CD4-positive, alpha-beta T cell (primary cell): ENCODE measurements at regions of chr20 and their contacts with region 1.

Region 1: GRCh38 chr20:3173610-3174441 is 477 bp upstream of the LZTS3 start:
- DNase-seq: peak; percentile 83 to 95 (median 92)
- ATAC-seq: peak; percentile 11
- H3K4me3 ChIP-seq: peak overlapping the region; percentile 87
- H3K4me3 Mint-ChIP-seq: peak overlapping the region; percentile 87
- H3K27ac ChIP-seq: no peak overlapping the region
- H3K27ac Mint-ChIP-seq: peak overlapping the region; percentile 85
- H3K4me1 ChIP-seq: peaks cover 22% of the 10 kb centered on the region
- H3K4me1 Mint-ChIP-seq: peaks cover 20% of the 10 kb centered on the region
- H3K27me3 ChIP-seq: peaks cover 9 to 11% of the 10 kb centered on the region in 2 experiments
- H3K27me3 Mint-ChIP-seq: peaks cover 31% of the 10 kb centered on the region
- CTCF ChIP-seq: no peak

Region 2: GRCh38 chr20:3051385-3052019 is 122.3 kb before region 1 on chr20:
- CTCF ChIA-PET with region 1: no interaction called
- POLR2A ChIA-PET with region 1: no interaction called
- intact Hi-C with region 1: loop called in 1 of 2 experiments (anchors 2 kb)
- DNase-seq: no peak
- ATAC-seq: peak; percentile 47
- H3K4me3 ChIP-seq: no peak overlapping the region
- H3K4me3 Mint-ChIP-seq: no peak overlapping the region
- H3K27ac ChIP-seq: no peak overlapping the region
- H3K27ac Mint-ChIP-seq: no peak overlapping the region
- H3K4me1 ChIP-seq: peaks cover 18% of the 10 kb centered on the region
- H3K4me1 Mint-ChIP-seq: peaks cover 18% of the 10 kb centered on the region
- H3K27me3 ChIP-seq: no peaks in the 10 kb centered on the region
- H3K27me3 Mint-ChIP-seq: no peaks in the 10 kb centered on the region
- CTCF ChIP-seq: no peak

Region 3: DNA sequence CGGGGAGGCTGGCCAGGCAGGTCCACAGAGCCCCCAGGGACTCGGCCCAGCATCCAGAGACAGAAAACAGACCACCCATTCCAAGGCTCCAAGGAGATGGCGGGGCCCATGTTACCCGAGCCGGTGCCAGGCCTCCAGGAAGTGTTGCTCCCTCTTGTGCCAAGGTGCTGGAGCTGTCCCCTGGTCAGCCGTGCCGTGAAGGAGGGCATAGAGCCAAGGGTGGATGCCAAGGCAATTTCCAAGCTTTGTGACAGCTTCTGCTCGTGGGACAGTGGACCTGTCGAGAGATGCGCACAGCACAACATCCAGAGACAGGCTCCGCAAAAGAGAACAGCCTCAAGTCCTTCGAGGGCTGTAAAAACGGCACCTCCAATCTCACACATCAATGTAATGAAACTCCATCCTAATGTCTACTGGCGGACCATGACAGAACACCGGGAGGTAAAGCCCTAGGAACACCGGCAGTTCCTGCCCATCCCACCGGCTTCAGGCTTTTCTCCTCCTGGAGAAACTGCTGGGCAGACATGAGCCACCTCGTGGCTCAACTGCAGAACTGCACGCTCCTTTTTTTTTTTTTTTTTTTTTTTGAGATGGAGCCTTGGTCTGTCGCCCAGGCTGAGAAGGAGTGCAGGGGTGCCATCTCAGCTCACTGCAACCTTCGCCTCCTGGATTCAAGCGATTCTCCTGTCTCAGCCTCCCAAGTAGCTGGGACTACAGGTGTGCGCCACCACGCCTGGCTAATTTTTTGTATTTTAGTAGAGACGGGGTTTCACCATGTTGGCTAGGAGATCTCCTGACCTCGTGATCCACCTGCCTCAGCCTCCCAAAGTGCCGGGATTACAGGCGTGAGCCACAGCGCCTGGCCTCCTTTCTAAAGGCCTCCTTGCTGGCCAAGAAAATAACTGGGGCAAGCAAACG is 58.4 kb before region 1 on chr20:
- CTCF ChIA-PET with region 1: no interaction called
- POLR2A ChIA-PET with region 1: no interaction called
- intact Hi-C with region 1: loop called (anchors 2 to 5 kb)
- DNase-seq: peak in 6 of 14 experiments; percentile 18 to 74 (median 36)
- ATAC-seq: peak; percentile 58
- H3K4me3 ChIP-seq: no peak overlapping the region
- H3K4me3 Mint-ChIP-seq: no peak overlapping the region
- H3K27ac ChIP-seq: no peak overlapping the region
- H3K27ac Mint-ChIP-seq: peak overlapping the region; percentile 22
- H3K4me1 ChIP-seq: peaks cover 23% of the 10 kb centered on the region
- H3K4me1 Mint-ChIP-seq: peaks cover 21% of the 10 kb centered on the region
- H3K27me3 ChIP-seq: no peaks in the 10 kb centered on the region
- H3K27me3 Mint-ChIP-seq: no peaks in the 10 kb centered on the region
- CTCF ChIP-seq: peak; percentile 87

Region 4: DNA sequence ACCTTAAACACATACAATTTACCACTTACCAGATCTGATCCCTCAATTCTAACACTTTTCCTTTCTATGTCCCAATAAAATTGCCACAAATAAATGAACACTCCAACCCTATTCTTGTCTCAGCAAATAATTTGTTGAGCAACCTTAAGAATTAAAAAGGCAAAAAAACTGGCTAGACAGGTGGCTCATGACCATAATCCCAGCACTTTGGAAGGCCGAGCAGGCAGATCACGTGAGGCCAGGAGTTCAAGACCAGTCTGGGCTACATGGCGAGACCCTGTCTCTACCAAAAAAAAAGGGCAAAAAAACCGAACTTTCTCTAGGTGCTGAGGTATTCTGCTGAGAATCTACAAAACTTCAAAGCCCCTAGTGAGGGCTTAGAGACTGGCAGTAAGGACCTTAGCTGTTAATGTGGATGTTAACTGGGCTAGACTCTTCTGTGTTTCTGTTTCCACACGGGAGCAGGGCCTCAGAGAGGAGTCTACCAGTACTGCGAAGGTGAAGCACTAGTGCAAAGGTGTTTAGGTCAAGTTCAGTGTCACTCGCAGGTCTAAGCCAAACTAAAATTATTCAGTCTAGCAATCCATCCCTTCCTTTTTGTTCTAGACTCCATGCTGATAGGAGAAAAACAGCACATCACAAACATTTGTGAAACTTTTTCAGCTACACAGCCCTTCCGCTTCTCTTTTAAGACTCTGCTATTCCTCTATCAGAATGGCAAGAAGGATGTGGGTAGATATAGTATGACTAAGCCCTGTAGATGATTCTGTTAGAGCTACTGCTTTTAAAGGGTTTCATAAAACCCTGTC is 16.8 kb before region 1 on chr20:
- CTCF ChIA-PET with region 1: interaction called, 10 read pairs
- POLR2A ChIA-PET with region 1: interaction called, 16 read pairs
- intact Hi-C with region 1: loop called (anchors 1 to 2 kb)
- DNase-seq: peak in 4 of 14 experiments; percentile 30 to 71 (median 61)
- ATAC-seq: peak; percentile 85
- H3K4me3 ChIP-seq: peak overlapping the region; percentile 97
- H3K4me3 Mint-ChIP-seq: peak overlapping the region; percentile 87
- H3K27ac ChIP-seq: peak overlapping the region; percentile 47 to 48
- H3K27ac Mint-ChIP-seq: peak overlapping the region; percentile 94
- H3K4me1 ChIP-seq: peaks cover 46% of the 10 kb centered on the region
- H3K4me1 Mint-ChIP-seq: peaks cover 75% of the 10 kb centered on the region
- H3K27me3 ChIP-seq: no peaks in the 10 kb centered on the region
- H3K27me3 Mint-ChIP-seq: no peaks in the 10 kb centered on the region
- CTCF ChIP-seq: no peak

Region 5: DNA sequence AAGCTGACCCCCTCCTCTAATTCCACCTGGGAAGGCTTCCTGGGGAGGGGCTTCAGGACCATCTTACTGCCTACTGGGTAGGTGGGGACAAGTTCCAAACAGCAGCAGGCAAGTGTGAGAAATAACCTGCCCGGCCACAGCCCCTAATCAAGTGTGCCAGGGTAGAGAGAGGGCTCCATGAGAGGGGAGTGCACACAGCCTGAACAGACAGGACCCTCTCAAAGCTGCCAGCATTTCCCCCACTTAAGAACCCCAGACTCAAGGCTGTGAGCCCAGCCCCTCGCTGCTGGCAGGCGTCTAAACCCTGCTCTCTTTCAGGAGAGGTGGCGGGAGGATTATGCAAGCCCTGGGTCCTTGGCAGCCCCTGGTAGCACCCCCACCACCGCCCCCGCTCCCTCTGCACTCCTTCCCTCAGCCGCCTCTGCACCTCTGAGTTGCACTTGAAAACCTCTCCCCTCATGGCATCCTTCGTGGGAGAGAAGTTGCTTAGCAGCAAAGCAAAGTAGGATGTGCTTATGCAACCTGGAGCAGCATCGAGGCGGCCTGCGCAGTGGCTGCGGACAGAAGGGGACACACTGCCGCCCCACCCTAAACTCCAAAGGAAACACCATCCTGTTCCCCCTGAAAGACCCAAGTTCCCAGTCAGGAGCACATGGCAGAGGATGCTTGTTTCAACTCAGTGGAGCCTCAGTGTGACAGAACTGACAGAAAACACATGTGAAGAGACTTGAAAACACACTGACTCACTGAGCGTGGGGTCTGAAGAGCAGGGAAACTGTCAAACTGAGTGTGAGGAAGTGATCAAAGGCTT is 20.2 kb after region 1 on chr20:
- CTCF ChIA-PET with region 1: no interaction called
- POLR2A ChIA-PET with region 1: no interaction called
- intact Hi-C with region 1: no loop called
- DNase-seq: no peak
- ATAC-seq: no peak
- H3K4me3 ChIP-seq: no peak overlapping the region
- H3K4me3 Mint-ChIP-seq: no peak overlapping the region
- H3K27ac ChIP-seq: no peak overlapping the region
- H3K27ac Mint-ChIP-seq: no peak overlapping the region
- H3K4me1 ChIP-seq: no peaks in the 10 kb centered on the region
- H3K4me1 Mint-ChIP-seq: peaks cover 9% of the 10 kb centered on the region
- H3K27me3 ChIP-seq: no peaks in the 10 kb centered on the region
- H3K27me3 Mint-ChIP-seq: no peaks in the 10 kb centered on the region
- CTCF ChIP-seq: no peak

Region 6: DNA sequence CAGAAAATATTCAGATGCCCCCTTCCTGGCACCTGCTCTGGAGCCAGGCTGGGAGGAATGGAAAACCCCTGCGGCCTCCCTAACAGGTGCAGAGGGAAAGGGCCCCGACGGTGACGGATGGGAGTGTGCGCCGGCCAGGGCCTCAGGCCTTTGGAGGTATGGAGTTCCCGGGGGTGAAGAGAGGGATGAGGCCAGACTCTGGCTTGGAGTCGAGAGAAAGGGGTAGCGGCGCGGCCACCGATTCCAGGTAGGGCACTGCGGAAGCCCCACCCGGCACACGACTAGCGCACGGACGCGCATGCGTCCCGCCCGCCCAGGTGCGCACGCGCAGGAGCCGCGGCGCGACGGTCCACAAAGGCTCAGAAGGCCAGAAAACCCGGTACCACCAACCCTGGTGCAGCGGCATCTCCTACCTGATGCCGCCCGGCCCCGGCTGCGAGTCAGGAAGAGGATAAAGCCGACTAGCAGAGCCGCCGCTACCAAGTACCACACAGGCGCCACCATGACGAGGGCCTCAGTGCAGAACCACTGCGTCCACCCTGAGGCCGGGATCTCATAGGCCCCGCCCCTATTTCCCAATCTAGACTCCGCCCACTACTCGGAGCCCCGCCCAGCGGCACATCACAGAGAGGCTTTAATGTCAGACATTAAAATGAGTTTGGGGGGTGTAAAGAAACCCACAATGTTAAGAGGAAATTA is 30.4 kb after region 1 on chr20 and contains the start of gene DDRGK1:
- CTCF ChIA-PET with region 1: no interaction called
- POLR2A ChIA-PET with region 1: no interaction called
- intact Hi-C with region 1: loop called in 1 of 2 experiments (anchors 1 kb)
- DNase-seq: peak; percentile 80 to 94 (median 88)
- ATAC-seq: peak; percentile 86
- H3K4me3 ChIP-seq: peak within 1 kb of the TSS; percentile 99
- H3K4me3 Mint-ChIP-seq: peak within 1 kb of the TSS; percentile 96
- H3K27ac ChIP-seq: peak within 1 kb of the TSS; percentile 78 to 83
- H3K27ac Mint-ChIP-seq: peak within 1 kb of the TSS; percentile 92
- H3K4me1 ChIP-seq: peaks cover 34% of the 10 kb centered on the region
- H3K4me1 Mint-ChIP-seq: peaks cover 29% of the 10 kb centered on the region
- H3K27me3 ChIP-seq: no peaks in the 10 kb centered on the region
- H3K27me3 Mint-ChIP-seq: no peaks in the 10 kb centered on the region
- CTCF ChIP-seq: no peak
- total RNA-seq, gene DDRGK1: 40.7 to 43.4 TPM

Region 7: DNA sequence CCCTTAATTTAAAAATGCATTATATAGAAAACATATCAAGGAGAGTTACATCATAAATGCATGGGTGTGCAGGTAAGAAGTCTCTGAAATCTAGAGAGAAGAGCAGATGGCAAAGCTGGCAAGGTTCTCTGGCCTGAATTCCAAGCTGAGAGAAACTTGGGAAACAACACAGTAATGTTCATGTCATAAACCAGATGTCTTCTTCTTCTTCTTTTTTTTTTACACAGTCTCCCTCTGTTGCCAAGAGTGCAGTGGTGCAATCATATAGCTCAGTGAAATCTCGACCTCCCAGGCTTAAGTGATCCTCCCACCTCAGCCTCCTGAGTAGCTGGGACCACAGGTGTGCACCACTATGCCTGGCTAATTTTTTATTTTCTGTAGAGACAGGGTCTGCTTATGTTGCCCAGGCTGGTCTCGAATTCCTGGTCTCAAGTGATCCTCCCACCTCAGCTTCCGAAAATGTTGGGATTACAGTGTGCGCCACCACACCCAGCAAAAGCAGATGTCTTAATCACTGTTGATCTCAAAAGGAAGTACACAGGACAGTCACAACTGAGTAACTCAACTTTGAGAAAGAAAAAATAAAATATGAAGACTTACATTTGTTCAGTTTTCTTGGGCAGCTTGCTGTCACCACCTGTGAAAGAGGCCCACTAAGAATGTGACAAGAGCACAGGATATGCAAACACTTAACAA is 156.4 kb after region 1 on chr20:
- CTCF ChIA-PET with region 1: no interaction called
- POLR2A ChIA-PET with region 1: no interaction called
- intact Hi-C with region 1: no loop called
- DNase-seq: peak in 1 of 14 experiments; percentile 4
- ATAC-seq: peak; percentile 37
- H3K4me3 ChIP-seq: no peak overlapping the region
- H3K4me3 Mint-ChIP-seq: no peak overlapping the region
- H3K27ac ChIP-seq: no peak overlapping the region
- H3K27ac Mint-ChIP-seq: peak overlapping the region; percentile 31
- H3K4me1 ChIP-seq: peaks cover 20% of the 10 kb centered on the region
- H3K4me1 Mint-ChIP-seq: peaks cover 35% of the 10 kb centered on the region
- H3K27me3 ChIP-seq: no peaks in the 10 kb centered on the region
- H3K27me3 Mint-ChIP-seq: no peaks in the 10 kb centered on the region
- CTCF ChIP-seq: no peak